Activated B cell treated with CpG ODN at 0.5 μM for 24 hours (primary cell): ENCODE measurements at regions of chr6 and their contacts with region 1.

Region 1: DNA sequence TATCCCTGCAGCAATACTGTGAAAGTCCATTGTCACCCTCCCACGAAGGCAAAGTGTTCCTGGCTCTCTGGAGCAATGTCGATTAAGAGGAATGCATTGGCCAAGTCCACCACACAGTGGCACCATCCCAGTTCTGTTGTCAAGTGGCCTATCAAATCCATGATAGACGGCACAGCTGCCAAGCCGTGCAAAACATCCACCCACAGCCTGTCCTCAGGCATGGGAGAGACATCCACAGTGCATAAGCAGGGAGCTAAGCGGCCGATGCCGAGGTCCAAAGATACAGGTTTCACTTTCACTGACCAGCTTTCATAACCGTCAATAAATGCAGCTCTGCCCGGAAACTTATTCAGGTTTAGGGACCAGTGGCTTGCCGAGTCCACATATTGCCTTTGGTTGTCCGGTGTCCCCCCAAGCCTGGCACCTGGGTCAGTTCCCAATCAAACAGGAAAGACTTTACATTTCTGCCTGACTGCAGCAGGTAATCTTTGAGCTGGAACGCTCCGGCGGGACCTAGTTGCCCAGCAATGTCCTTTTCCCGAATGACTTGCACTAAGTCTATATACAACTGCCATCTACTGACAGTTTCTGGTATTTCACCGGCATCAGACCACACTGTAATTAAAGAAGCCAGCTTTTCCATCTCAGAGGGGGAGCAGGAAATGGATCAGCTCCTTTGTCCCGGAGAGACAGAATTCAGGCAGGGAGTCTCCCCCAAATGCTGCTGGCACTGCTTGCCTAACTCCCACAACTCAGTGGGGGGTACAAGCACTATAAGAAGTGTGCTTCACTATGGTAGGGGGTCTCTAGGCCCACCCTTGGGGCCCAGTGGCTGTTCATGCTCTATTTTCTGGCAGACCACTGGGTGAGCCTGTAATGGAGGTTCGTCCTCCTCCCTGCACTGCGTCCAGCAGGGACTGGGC is 6.3 kb downstream of the ZKSCAN3 start:
- DNase-seq: peak; percentile 41
- ATAC-seq: peak; percentile 85
- H3K4me3 Mint-ChIP-seq: peak overlapping the region; percentile 91
- H3K27ac Mint-ChIP-seq: peak overlapping the region; percentile 71
- H3K4me1 Mint-ChIP-seq: peaks cover 21% of the 10 kb centered on the region
- H3K27me3 Mint-ChIP-seq: no peaks in the 10 kb centered on the region
- CTCF ChIP-seq: peak; percentile 82

Region 2: DNA sequence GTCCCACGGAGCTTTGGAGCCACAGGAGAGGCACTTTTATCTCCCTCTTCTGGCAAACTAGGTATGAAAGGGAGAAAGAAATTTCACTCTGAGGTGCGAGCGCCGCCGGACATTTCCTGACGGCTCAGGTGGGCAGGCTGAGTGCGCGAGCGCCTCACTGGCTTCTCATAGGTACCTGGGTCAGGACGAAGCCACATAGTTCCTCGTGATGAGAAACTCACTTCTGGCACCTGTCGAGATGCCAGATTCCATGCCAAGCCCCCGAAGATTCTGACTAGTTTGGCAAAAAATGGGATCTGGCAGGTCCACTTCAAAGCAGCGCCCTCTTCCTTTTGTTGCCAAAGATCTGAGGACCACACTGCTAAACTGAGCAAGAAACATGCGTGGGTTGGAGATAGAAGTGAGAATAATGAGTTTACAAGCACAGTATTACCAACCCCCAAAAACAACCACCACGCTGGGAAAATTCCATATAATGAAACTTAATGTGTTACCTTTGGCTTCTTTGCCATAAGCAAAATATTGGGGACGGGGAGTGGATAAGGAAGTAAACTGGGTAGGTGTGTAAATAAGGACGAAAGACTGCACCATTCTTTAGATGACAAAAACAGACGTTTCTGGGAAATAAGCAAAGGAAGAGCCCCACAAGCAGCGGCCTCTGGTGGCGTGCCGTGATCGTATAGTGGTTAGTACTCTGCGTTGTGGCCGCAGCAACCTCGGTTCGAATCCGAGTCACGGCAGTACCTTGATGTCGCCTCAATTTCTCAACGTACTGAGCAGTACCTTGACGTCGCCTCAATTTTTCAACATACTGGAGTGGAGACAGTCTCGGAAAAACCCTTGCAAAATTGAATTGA is 1198.3 kb before region 1 on chr6:
- CTCF ChIA-PET with region 1: no interaction called
- POLR2A ChIA-PET with region 1: no interaction called
- intact Hi-C with region 1: loop called (anchors 1 kb)
- DNase-seq: peak; percentile 60
- ATAC-seq: peak; percentile 80
- H3K4me3 Mint-ChIP-seq: peak overlapping the region; percentile 89
- H3K27ac Mint-ChIP-seq: peak overlapping the region; percentile 81
- H3K4me1 Mint-ChIP-seq: peaks cover 33% of the 10 kb centered on the region
- H3K27me3 Mint-ChIP-seq: no peaks in the 10 kb centered on the region
- CTCF ChIP-seq: no peak

Region 3: GRCh38 chr6:27772261-27773001 is 583.6 kb before region 1 on chr6:
- CTCF ChIA-PET with region 1: interaction called, 4 read pairs
- POLR2A ChIA-PET with region 1: no interaction called
- intact Hi-C with region 1: loop called (anchors 5 kb)
- DNase-seq: peak; percentile 74
- ATAC-seq: peak; percentile 92
- H3K4me3 Mint-ChIP-seq: peak overlapping the region; percentile 57
- H3K27ac Mint-ChIP-seq: peak overlapping the region; percentile 66
- H3K4me1 Mint-ChIP-seq: peaks cover 38% of the 10 kb centered on the region
- H3K27me3 Mint-ChIP-seq: peaks cover 5% of the 10 kb centered on the region
- CTCF ChIP-seq: peak; percentile 66

Region 4: GRCh38 chr6:28104392-28105244 is 251.4 kb before region 1 on chr6:
- CTCF ChIA-PET with region 1: interaction called, 10 read pairs
- POLR2A ChIA-PET with region 1: interaction called, 5 read pairs
- intact Hi-C with region 1: loop called (anchors 1 kb)
- DNase-seq: peak; percentile 80
- ATAC-seq: peak; percentile 98
- H3K4me3 Mint-ChIP-seq: peak overlapping the region; percentile 94
- H3K27ac Mint-ChIP-seq: peak overlapping the region; percentile 95
- H3K4me1 Mint-ChIP-seq: peaks cover 10% of the 10 kb centered on the region
- H3K27me3 Mint-ChIP-seq: peaks cover 6% of the 10 kb centered on the region
- CTCF ChIP-seq: no peak

Region 5: GRCh38 chr6:28303570-28303969 is 52.4 kb before region 1 on chr6:
- CTCF ChIA-PET with region 1: no interaction called
- POLR2A ChIA-PET with region 1: no interaction called
- intact Hi-C with region 1: no loop called
- DNase-seq: no peak
- ATAC-seq: no peak
- H3K4me3 Mint-ChIP-seq: no peak overlapping the region
- H3K27ac Mint-ChIP-seq: no peak overlapping the region
- H3K4me1 Mint-ChIP-seq: peaks cover 5% of the 10 kb centered on the region
- H3K27me3 Mint-ChIP-seq: no peaks in the 10 kb centered on the region
- CTCF ChIP-seq: no peak

Region 6: GRCh38 chr6:28335564-28336283 is 20.3 kb before region 1 on chr6 and contains the start of gene ZSCAN31:
- CTCF ChIA-PET with region 1: interaction called, 14 read pairs
- POLR2A ChIA-PET with region 1: interaction called, 3 read pairs
- intact Hi-C with region 1: no loop called
- DNase-seq: peak; percentile 61
- ATAC-seq: peak; percentile 93
- H3K4me3 Mint-ChIP-seq: no peak within 1 kb of the TSS
- H3K27ac Mint-ChIP-seq: no peak within 1 kb of the TSS
- H3K4me1 Mint-ChIP-seq: no peaks in the 10 kb centered on the region
- H3K27me3 Mint-ChIP-seq: no peaks in the 10 kb centered on the region
- CTCF ChIP-seq: no peak
- total RNA-seq, gene ZSCAN31: 1.0 and 3.6 TPM in 2 replicates